ENCODE measurements at regions of chr2 and their contacts with region 1.

Region 1: GRCh38 chr2:86562922-86563649 is at the start of gene CHMP3:
- DNase-seq: peak; percentile 95 to 100
- ATAC-seq: peak; percentile 86 to 94 (median 88)
- H3K4me3 ChIP-seq: peak within 1 kb of the TSS; percentile 92
- H3K4me3 Mint-ChIP-seq: peak within 1 kb of the TSS; percentile 96
- H3K27ac ChIP-seq: peak within 1 kb of the TSS; percentile 99
- H3K27ac Mint-ChIP-seq: peak within 1 kb of the TSS; percentile 96 to 99
- H3K4me1 ChIP-seq: peaks cover 11% of the 10 kb centered on the region
- H3K4me1 Mint-ChIP-seq: peaks cover 28 to 34% of the 10 kb centered on the region in 2 donors
- H3K27me3 ChIP-seq: peaks cover 3% of the 10 kb centered on the region
- H3K27me3 Mint-ChIP-seq: peaks cover 3 to 21% of the 10 kb centered on the region in 2 donors
- CTCF ChIP-seq: no peak
- total RNA-seq, gene CHMP3: 47.4 to 50.3 (median 49.3) TPM

Region 2: DNA sequence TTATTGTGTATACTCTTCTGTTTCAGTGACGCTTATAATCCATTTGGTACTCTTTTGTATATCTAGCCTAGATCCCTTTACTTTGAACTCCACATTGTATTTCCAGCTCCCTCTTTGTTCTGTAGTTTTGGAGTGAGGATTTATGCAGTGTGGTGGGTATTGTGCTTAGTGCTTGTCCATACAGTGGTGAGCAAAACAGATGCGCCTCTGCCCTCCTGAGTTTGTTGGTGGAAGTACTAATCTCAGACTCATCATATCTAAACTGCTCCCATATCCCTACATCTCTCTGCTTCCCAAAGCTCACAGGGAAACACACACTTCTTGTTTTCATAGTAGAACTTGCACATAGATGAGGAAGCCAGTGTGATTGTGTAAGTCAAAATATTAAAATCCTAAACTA is 445.0 kb before region 1 on chr2:
- intact Hi-C with region 1: no loop called
- DNase-seq: no peak
- ATAC-seq: no peak
- H3K4me3 ChIP-seq: no peak overlapping the region
- H3K4me3 Mint-ChIP-seq: no peak overlapping the region
- H3K27ac ChIP-seq: no peak overlapping the region
- H3K27ac Mint-ChIP-seq: no peak overlapping the region
- H3K4me1 ChIP-seq: no peaks in the 10 kb centered on the region
- H3K4me1 Mint-ChIP-seq: peaks cover 8 to 11% of the 10 kb centered on the region in 2 donors
- H3K27me3 ChIP-seq: no peaks in the 10 kb centered on the region
- H3K27me3 Mint-ChIP-seq: no peaks in the 10 kb centered on the region
- CTCF ChIP-seq: no peak

Region 3: GRCh38 chr2:86623651-86624541 is 60.8 kb after region 1 on chr2 and contains the start of gene RNF103:
- intact Hi-C with region 1: loop called (anchors 2 kb)
- DNase-seq: peak; percentile 91 to 94
- ATAC-seq: peak; percentile 84 to 93 (median 85)
- H3K4me3 ChIP-seq: peak within 1 kb of the TSS; percentile 97
- H3K4me3 Mint-ChIP-seq: peak within 1 kb of the TSS; percentile 93
- H3K27ac ChIP-seq: peak within 1 kb of the TSS; percentile 98
- H3K27ac Mint-ChIP-seq: peak within 1 kb of the TSS; percentile 84 to 95
- H3K4me1 ChIP-seq: peaks cover 9% of the 10 kb centered on the region
- H3K4me1 Mint-ChIP-seq: peaks cover 28 to 44% of the 10 kb centered on the region in 2 donors
- H3K27me3 ChIP-seq: no peaks in the 10 kb centered on the region
- H3K27me3 Mint-ChIP-seq: peaks cover 3 to 21% of the 10 kb centered on the region in 2 donors
- CTCF ChIP-seq: no peak
- total RNA-seq, gene RNF103: 52.9 to 74.2 (median 70.9) TPM